ENCODE measurements at regions of chr4 and their contacts with region 1.

Region 1: GRCh38 chr4:184782731-184783373 is 42.9 kb downstream of the ACSL1 start:
- DNase-seq: peak; percentile 25
- ATAC-seq: peak; percentile 72
- H3K4me3 Mint-ChIP-seq: peak overlapping the region; percentile 75
- H3K27ac Mint-ChIP-seq: peak overlapping the region; percentile 86
- H3K4me1 Mint-ChIP-seq: peaks cover 20% of the 10 kb centered on the region
- H3K27me3 Mint-ChIP-seq: no peaks in the 10 kb centered on the region
- CTCF ChIP-seq: no peak

Region 2: DNA sequence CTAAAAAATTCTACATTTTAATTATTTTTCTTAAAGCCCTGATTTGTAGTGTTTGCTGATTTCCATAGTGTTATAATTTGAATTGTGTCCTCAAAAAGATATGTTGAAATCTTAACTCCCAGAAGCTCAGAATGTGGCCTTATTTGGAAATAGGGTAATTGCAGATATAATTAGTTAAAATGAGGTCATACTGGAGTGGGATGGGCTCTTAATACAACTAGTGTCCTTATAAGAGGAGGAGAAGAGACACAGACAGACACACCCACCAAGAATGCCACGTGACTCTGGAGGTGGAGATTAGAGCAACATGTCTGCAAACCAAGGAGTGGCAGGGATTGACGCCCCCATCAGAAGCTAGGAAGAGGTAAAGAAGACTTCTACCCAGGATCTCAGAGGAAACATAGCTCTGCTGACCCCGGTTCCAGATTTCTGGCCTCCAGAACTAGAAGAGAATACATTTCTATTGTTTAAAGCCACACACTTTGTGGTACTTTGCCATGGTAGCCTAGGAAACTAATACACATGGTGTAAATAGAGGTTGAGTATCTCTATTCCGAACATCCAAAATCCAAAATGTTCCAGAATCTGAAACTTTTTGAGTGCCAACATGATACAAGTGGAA is 238.0 kb before region 1 on chr4:
- CTCF ChIA-PET with region 1: no interaction called
- POLR2A ChIA-PET with region 1: no interaction called
- intact Hi-C with region 1: no loop called
- DNase-seq: no peak
- ATAC-seq: no peak
- H3K4me3 Mint-ChIP-seq: no peak overlapping the region
- H3K27ac Mint-ChIP-seq: no peak overlapping the region
- H3K4me1 Mint-ChIP-seq: peaks cover 17% of the 10 kb centered on the region
- H3K27me3 Mint-ChIP-seq: no peaks in the 10 kb centered on the region
- CTCF ChIP-seq: no peak

Region 3: DNA sequence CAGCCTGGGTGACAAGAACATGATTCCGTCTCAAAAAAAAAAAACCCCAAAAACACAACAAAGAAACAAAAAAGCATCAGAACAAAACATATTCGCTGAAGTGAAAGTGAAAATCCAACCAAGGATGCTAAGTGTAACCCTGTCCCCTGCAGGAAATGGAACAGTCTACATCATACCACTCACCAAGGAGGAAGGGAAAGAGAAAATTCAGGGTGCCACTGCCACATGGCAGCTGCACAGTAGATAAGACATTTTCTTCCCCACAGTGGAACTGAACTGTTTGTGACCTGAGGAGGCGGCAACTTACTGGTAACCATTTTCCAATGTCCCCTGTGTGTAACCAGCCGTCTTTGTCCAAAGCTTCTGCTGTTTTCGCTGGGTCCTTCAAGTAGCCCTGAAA is 20.8 kb before region 1 on chr4:
- CTCF ChIA-PET with region 1: no interaction called
- POLR2A ChIA-PET with region 1: no interaction called
- intact Hi-C with region 1: no loop called
- DNase-seq: no peak
- ATAC-seq: peak; percentile 47
- H3K4me3 Mint-ChIP-seq: no peak overlapping the region
- H3K27ac Mint-ChIP-seq: no peak overlapping the region
- H3K4me1 Mint-ChIP-seq: peaks cover 8% of the 10 kb centered on the region
- H3K27me3 Mint-ChIP-seq: no peaks in the 10 kb centered on the region
- CTCF ChIP-seq: no peak

Region 4: GRCh38 chr4:184911310-184911709 is 128.5 kb after region 1 on chr4:
- CTCF ChIA-PET with region 1: interaction called, 7 read pairs
- POLR2A ChIA-PET with region 1: no interaction called
- intact Hi-C with region 1: loop called (anchors 1 kb)
- DNase-seq: no peak
- ATAC-seq: no peak
- H3K4me3 Mint-ChIP-seq: no peak overlapping the region
- H3K27ac Mint-ChIP-seq: no peak overlapping the region
- H3K4me1 Mint-ChIP-seq: peaks cover 7% of the 10 kb centered on the region
- H3K27me3 Mint-ChIP-seq: peaks cover 3% of the 10 kb centered on the region
- CTCF ChIP-seq: no peak

Region 5: DNA sequence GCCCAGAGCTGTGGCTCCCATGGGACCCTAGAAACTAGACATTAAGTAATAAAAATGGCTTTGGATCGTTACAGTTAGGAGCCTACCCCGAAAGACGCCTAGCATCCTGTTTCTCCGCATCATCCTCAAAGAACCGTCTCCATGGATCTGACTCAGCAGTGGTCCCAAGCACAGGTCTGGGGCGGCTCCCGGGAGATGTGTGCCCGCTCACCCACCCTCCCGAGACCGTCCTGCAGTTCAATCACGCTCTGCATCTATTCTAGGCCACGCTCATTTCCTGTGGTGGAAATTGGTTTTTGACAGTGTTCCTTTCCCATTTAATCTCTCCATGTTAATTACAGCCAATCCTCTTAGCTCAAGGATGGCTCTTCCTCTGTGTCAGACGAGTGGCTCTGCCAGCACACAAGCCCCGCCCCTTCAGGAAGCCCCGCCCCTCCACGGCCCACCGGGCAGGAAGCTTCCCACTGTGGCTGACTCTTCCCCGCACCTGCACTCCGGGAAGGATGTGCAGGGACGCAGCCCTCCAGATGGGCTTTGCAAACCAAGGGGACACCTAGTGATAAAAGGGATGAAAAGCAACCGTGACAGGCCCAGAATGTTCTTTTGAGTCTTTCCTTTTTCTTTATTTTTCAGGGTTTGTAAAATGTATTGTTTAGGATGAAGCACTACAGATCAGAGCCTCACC is 201.0 kb after region 1 on chr4:
- CTCF ChIA-PET with region 1: no interaction called
- POLR2A ChIA-PET with region 1: no interaction called
- intact Hi-C with region 1: no loop called
- DNase-seq: peak; percentile 61
- ATAC-seq: peak; percentile 89
- H3K4me3 Mint-ChIP-seq: no peak overlapping the region
- H3K27ac Mint-ChIP-seq: no peak overlapping the region
- H3K4me1 Mint-ChIP-seq: no peaks in the 10 kb centered on the region
- H3K27me3 Mint-ChIP-seq: peaks cover 3% of the 10 kb centered on the region
- CTCF ChIP-seq: no peak

Measured in activated B cell treated with CpG ODN at 0.5 μM for 24 hours (primary cell).